WTC11 (cell line): ENCODE measurements at regions of chr19 and their contacts with region 1.

Region 1: GRCh38 chr19:11535792-11536595 is 2.7 kb upstream of the CNN1 start:
- DNase-seq: peak; percentile 94
- ATAC-seq: peak; percentile 46
- H3K4me3 Mint-ChIP-seq: peak overlapping the region; percentile 78
- H3K27ac Mint-ChIP-seq: peak overlapping the region; percentile 88
- H3K4me1 Mint-ChIP-seq: peaks cover 21% of the 10 kb centered on the region
- H3K27me3 Mint-ChIP-seq: peaks cover 35% of the 10 kb centered on the region
- CTCF ChIP-seq: peak; percentile 95

Region 2: DNA sequence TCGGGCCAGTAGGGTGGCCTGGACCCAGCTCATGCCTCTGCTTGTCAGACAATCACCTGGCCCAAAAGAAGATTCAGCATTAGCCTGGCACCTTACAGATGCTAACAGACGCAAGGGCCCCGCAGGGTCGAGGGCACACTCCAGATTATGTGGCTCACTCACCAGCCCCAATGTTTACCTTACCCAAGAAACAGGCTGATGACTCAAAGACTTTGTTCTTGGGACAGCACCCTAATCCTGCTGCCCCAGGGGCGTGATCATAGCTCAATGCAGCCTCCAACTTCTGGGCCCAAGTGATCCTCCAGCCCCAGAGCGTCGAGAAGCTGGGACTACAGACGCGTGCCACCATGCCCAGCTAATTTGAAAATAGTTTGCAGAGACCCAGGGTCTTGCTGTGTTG is 16.9 kb before region 1 on chr19:
- CTCF ChIA-PET with region 1: no interaction called
- POLR2A ChIA-PET with region 1: no interaction called
- DNase-seq: no peak
- ATAC-seq: no peak
- H3K4me3 Mint-ChIP-seq: no peak overlapping the region
- H3K27ac Mint-ChIP-seq: no peak overlapping the region
- H3K4me1 Mint-ChIP-seq: no peaks in the 10 kb centered on the region
- H3K27me3 Mint-ChIP-seq: no peaks in the 10 kb centered on the region
- CTCF ChIP-seq: no peak

Region 3: DNA sequence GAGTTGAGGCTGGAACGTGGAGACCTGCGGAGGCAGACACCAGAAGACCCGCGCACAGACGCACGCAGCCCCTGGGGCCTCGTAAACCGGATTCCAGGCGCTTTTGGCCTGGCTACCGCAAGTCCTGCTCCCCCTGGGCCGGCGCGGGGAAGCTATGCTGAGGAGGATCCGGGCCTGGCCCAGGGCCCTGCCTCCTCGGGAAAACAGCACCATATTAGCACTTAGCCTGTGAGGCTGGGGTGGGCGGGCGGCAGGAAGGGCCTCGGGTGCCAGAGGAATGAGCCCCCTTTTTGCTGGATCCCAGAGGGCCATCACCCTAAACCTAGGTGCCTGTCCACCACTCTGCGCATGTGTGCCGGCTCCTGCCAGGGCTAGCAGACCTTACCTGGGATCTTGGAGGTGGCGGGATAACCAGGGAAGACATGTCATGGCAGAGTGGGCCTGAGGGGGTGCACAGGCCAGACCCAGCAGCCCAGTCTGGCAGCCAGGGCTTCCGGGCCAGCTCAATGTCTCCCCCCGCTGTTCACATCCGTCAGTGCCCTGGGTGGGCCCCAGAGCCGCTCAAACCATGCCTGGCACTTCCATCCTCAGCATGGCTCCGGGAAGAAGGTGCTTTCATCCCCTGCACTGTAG is 15.7 kb after region 1 on chr19:
- CTCF ChIA-PET with region 1: interaction called, 12 read pairs
- POLR2A ChIA-PET with region 1: interaction called, 3 read pairs
- DNase-seq: peak; percentile 73
- ATAC-seq: peak; percentile 95
- H3K4me3 Mint-ChIP-seq: no peak overlapping the region
- H3K27ac Mint-ChIP-seq: no peak overlapping the region
- H3K4me1 Mint-ChIP-seq: no peaks in the 10 kb centered on the region
- H3K27me3 Mint-ChIP-seq: no peaks in the 10 kb centered on the region
- CTCF ChIP-seq: peak; percentile 35; the same call in 1 of the 2 replicates

Region 4: DNA sequence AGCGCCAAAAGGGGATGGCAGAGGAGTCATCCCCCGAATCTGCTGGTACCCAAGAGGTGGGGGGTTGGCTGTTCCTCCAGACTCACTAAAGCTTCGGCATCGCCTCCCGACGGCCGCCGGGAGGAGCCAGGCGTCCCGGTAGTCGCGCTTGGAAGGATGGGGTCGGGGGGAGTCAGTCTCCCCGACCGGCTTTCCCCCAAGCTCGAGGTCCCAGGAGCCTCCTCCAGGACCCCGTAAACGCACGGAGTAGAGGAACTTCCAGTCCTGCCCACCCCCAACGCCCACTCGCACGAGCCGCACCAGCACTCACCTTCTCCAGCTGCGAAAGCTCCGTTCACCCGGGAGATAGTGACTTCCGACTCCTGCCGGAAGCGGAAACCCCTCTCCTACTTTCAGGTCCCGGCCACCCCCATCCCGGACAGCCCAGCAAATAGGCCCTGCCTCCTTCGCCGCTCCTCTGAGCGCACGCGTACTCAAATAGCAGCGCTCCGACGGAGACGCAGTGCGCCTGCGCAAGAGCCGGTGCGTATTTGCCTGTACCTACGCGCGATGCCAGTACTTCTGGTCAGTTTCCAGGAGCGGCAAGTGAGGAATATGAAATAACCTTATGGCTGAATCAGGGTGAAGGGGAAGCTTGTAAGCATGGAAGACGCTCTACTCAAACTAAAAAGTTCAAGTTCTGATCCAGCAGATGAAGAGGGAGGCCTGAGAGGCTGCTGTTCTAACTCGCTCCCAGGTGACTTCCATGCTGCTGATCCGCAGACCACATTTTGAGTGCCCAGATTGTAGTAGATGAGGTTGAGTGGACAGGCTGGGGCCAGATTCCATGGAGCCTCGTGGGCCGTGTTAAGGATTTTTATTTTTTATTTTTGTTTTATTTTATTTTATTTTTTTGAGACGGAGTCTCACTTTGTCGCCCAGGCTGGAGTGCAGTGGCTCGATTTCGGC is 23.2 kb after region 1 on chr19 and contains the start of gene ELOF1:
- CTCF ChIA-PET with region 1: interaction called, 12 read pairs
- POLR2A ChIA-PET with region 1: interaction called, 6 read pairs
- DNase-seq: peak; percentile 98
- ATAC-seq: peak; percentile 96
- H3K4me3 Mint-ChIP-seq: peak within 1 kb of the TSS; percentile 83
- H3K27ac Mint-ChIP-seq: peak within 1 kb of the TSS; percentile 90
- H3K4me1 Mint-ChIP-seq: peaks cover 16% of the 10 kb centered on the region
- H3K27me3 Mint-ChIP-seq: peaks cover 2% of the 10 kb centered on the region; the same call in 1 of the 2 replicates
- CTCF ChIP-seq: no peak
- total RNA-seq, gene ELOF1: 70.9 to 86.0 TPM (median 73.4 TPM) in 3 replicates

Region 5: DNA sequence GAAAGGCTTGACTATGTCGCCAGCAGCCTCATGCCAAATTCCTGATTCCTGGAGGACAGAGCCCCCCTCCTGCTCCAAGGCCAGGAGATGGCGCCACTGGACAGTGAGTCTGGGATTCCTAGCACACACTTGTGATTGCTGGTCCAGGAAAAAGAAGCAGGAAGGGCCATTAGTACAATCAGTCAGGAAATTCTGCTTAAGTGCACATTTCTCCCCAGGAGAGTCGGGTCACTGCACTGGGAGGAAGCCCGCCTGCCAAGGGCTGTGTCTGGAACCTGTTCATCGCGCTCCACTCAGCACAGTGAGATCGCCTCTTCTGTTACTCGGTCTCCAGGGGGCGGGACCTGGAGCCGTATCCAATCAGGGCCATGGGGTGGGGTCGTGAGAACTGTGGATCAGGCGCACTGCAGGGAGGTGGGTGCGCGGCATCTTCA is 137.6 kb after region 1 on chr19:
- CTCF ChIA-PET with region 1: no interaction called
- POLR2A ChIA-PET with region 1: no interaction called
- DNase-seq: peak; percentile 84
- ATAC-seq: peak; percentile 97
- H3K4me3 Mint-ChIP-seq: peak overlapping the region; percentile 88
- H3K27ac Mint-ChIP-seq: peak overlapping the region; percentile 71; the same call in 1 of the 2 replicates
- H3K4me1 Mint-ChIP-seq: peaks cover 4% of the 10 kb centered on the region; the same call in 1 of the 2 replicates
- H3K27me3 Mint-ChIP-seq: peaks cover 19% of the 10 kb centered on the region
- CTCF ChIP-seq: peak; percentile 46; the same call in 1 of the 2 replicates

Region 6: DNA sequence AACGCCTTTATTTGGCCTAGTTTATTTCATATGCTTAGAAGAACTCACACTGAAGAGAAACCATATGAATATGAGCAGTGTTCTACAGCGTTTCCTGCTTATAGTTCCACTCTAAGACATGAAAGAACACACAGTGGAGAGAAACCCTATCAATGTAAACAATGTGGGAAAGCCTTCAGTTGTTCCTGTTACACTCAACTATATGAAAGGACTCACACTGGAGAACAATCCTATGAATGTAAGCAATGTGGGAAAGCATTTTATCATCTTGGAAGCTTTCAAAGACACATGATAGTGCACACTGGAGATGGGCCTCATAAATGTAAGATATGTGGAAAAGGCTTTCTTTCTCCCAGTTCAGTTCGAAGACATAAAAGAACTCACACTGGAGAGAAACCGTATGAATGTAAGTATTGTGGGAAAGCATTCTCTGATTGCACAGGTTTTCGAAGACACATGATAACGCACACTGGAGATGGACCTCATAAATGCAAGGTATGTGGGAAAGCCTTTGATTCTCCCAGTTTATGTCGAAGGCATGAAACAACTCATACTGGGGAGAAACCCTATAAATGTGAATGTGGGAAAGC is 244.5 kb after region 1 on chr19:
- CTCF ChIA-PET with region 1: no interaction called
- POLR2A ChIA-PET with region 1: no interaction called
- DNase-seq: no peak
- ATAC-seq: no peak
- H3K4me3 Mint-ChIP-seq: no peak overlapping the region
- H3K27ac Mint-ChIP-seq: no peak overlapping the region
- H3K4me1 Mint-ChIP-seq: peaks cover 2% of the 10 kb centered on the region; the same call in 1 of the 2 replicates
- H3K27me3 Mint-ChIP-seq: peaks cover 12% of the 10 kb centered on the region
- CTCF ChIP-seq: no peak